Kidney (tissue), 22 donors: ENCODE measurements at regions of chr16 and their contacts with region 1.

Region 1: DNA sequence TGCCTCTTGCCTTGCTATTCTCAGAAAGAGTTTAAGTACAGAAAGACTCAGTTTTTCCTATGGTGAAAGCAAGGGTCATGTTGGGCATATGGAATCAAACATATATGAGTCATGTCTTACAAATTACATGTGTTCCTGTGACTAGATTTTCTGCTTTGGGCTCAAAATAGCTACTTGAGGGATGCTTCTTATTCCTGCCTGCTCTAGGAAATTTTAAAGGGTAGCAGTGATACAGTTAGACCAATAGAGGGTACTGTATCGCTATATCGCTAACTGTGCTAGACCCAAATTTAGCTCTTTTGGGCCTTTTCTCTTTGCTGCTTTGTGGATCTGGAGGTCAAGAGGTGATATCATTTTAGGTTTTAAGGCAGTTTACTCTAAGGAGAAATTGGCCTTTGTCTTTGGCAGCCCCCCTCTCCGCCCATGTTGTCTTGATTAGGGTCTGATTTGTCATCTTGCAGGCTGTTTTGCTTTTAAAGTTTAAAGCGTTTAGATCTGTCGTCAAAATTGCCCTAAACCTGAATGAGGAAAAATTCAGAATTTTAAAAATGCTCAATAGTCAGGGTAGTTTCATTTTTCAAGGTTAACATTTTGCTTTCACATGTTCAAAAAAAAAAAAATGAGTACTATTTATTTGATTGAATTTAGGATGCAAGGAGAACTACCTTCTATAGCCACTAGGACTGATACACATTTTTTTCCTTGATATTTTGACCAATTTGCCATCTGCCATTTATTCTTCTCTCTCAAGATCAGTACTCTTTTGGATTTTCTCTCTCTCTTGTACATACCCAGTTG is 8.8 kb downstream of the NFATC3 start:
- DNase-seq: no peak
- H3K4me3 ChIP-seq: no peak overlapping the region
- H3K27ac ChIP-seq: no peak overlapping the region
- H3K4me1 ChIP-seq: peaks cover 0 to 19% (median 4%) of the 10 kb centered on the region in 3 donors
- H3K27me3 ChIP-seq: no peaks in the 10 kb centered on the region
- CTCF ChIP-seq: peak; percentile 41

Region 2: DNA sequence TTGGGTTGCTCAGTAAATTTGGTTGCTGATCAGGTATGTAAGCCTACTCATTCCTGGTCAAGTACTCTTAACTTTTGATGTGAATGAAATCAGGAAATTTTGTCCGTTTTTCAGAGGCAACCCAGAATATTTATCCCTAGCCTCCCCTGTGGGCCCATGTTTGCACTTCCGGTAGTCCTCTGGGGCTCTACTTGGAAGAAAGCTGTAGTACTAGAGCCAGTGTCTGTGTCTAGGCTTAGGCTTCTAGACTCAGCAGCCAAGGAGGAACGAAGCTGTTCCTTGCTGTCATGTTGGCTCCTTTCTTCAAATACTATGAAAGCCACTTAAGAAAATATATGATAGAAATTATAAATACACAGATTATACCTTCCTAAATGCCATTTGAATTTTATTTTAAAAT is 120.7 kb after region 1 on chr16:
- intact Hi-C with region 1: loop called (anchors 10 kb)
- DNase-seq: no peak
- H3K4me3 ChIP-seq: no peak overlapping the region
- H3K27ac ChIP-seq: no peak overlapping the region
- H3K4me1 ChIP-seq: no peaks in the 10 kb centered on the region
- H3K27me3 ChIP-seq: no peaks in the 10 kb centered on the region
- CTCF ChIP-seq: no peak

Region 3: GRCh38 chr16:68264128-68265077 is 170.4 kb after region 1 on chr16 and contains the start of gene SLC7A6:
- intact Hi-C with region 1: no loop called
- DNase-seq: peak; percentile 73 to 92 (median 80)
- H3K4me3 ChIP-seq: peak within 1 kb of the TSS; percentile 64 to 77 (median 65)
- H3K27ac ChIP-seq: peak within 1 kb of the TSS; percentile 92 to 96
- H3K4me1 ChIP-seq: peaks cover 0 to 27% (median 13%) of the 10 kb centered on the region in 3 donors
- H3K27me3 ChIP-seq: no peaks in the 10 kb centered on the region
- CTCF ChIP-seq: peak; percentile 53
- total RNA-seq, gene SLC7A6: 24.0 TPM